Activated CD4-positive, alpha-beta memory T cell treated with anti-CD3 and anti-CD28 coated beads for 36 hours (primary cell): ENCODE measurements at regions of chr9 and their contacts with region 1.

Region 1: GRCh38 chr9:35778496-35778895 is 12.9 kb upstream of the NPR2 start:
- DNase-seq: no peak
- H3K4me3 Mint-ChIP-seq: no peak overlapping the region
- H3K27ac Mint-ChIP-seq: no peak overlapping the region
- H3K4me1 Mint-ChIP-seq: no peaks in the 10 kb centered on the region
- H3K27me3 Mint-ChIP-seq: no peaks in the 10 kb centered on the region

Region 2: GRCh38 chr9:35790385-35791296 is 12.1 kb after region 1 on chr9:
- CTCF ChIA-PET with region 1: interaction called, 11 read pairs
- POLR2A ChIA-PET with region 1: no interaction called
- intact Hi-C with region 1: no loop called
- DNase-seq: peak; percentile 60
- H3K4me3 Mint-ChIP-seq: no peak overlapping the region
- H3K27ac Mint-ChIP-seq: no peak overlapping the region
- H3K4me1 Mint-ChIP-seq: peaks cover 5% of the 10 kb centered on the region
- H3K27me3 Mint-ChIP-seq: no peaks in the 10 kb centered on the region

Region 3: DNA sequence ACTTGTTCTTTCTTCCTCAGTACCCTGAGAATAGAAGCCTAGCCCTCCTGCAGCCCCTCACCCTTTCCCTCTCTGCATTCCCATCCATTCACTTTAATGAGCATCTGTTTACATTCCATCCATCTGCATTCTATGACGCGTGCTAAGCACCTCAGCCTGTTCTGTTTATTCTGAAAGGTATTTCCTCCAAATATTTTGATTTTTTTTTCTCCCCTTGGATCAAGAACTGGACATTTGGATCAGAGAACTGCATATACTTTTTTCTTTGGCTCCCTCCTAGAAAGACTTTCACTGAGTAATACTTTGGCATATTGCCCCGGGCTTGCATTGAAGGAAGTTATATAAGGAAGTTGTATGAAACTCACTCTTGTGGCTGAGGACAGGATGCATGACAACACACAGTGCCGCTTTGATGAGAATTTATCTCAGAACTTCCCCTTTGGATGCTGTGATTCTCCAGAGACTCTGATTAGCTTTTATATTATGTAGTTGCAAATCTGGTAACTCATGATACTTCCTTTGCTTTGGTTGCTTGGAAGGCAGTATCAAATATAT is 66.3 kb after region 1 on chr9:
- CTCF ChIA-PET with region 1: no interaction called
- POLR2A ChIA-PET with region 1: no interaction called
- intact Hi-C with region 1: no loop called
- DNase-seq: no peak
- H3K4me3 Mint-ChIP-seq: no peak overlapping the region
- H3K27ac Mint-ChIP-seq: no peak overlapping the region
- H3K4me1 Mint-ChIP-seq: peaks cover 36% of the 10 kb centered on the region
- H3K27me3 Mint-ChIP-seq: no peaks in the 10 kb centered on the region

Region 4: GRCh38 chr9:36292631-36293030 is 514.1 kb after region 1 on chr9:
- CTCF ChIA-PET with region 1: no interaction called
- POLR2A ChIA-PET with region 1: no interaction called
- intact Hi-C with region 1: no loop called
- DNase-seq: no peak
- H3K4me3 Mint-ChIP-seq: no peak overlapping the region
- H3K27ac Mint-ChIP-seq: no peak overlapping the region
- H3K4me1 Mint-ChIP-seq: no peaks in the 10 kb centered on the region
- H3K27me3 Mint-ChIP-seq: no peaks in the 10 kb centered on the region